ENCODE measurements at regions of chr19 and their contacts with region 1.

Region 1: DNA sequence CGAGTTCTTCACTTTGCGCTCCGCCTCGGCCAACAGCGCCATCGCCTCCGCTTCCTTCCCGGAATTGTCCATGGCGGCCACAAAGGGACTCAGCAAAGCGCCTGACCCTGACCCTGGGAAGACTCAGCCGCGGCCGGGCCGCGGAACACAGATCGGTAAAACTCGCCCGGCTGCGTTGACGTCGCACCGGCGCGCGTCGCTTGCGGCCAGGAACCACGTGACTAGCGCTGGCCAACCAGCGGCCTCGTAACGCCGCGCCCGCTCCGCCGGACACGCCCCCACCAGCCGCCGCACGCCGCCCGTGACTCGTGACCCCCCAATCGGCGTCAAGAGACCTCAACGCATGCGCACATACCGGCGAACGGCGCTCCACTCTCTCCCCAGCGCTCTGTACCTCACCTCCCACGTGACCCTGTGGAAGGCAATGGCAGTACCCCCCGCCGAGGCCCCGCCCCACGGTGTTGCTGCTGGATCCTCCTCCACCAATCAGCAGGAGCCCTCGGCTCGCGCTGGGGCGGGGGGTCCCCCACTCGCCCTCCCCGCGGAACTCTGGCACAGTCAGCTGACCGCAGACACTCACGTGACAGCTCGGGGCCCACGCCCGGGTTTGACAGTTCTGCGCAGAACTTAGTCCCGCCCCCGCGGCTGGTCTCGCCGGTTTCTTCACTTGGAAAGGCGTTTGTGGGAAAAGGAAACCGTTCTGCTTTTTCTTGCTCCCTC is at the start of gene NAPA:
- DNase-seq: peak; percentile 100
- ATAC-seq: peak; percentile 95
- H3K4me3 Mint-ChIP-seq: peak within 1 kb of the TSS; percentile 95
- H3K27ac Mint-ChIP-seq: peak within 1 kb of the TSS; percentile 97
- H3K4me1 Mint-ChIP-seq: peaks cover 58% of the 10 kb centered on the region
- H3K27me3 Mint-ChIP-seq: peaks cover 8% of the 10 kb centered on the region
- total RNA-seq, gene NAPA: 96.4 to 103 TPM

Region 2: DNA sequence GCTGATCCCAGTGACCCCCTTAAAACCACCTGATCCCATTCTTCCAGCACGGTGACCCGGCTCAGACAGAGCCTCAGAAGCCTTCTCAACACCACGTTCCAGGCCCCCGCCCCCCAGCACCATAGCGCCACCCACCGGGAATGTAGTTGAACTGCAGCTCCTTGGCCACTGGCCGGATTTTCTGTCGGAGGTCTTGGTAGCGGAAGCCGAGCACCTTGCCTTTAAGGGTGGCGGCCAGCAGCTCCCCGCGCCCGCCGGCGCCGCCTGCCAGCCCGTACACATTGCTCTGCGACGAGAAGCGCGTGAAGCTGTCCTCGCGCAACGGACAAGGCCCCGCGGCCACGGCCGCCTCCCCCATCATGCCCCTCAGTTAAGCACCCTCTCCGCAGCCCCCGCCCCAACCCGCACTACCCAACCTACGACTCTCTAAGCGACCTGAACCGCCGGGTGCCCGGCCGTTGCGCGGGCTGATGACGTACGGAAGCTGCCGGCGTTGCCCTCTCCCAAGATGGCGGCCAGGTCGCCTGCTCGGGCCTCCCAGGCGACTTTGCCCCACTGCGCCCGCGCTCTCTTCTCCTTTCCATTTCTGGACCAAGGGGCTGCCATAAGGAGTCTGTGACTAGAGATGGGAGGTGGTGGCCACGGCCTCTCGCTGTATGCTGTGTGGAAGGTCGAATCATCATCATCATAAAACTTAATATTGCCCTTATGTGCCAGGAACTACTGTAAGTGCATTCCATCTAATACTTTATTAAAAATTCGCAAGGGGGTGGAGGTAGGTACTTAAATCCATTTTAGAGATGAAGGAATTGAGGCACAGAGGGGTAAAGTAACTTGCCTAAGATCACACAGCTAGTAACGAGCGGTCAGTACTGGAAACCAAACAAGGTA is 31.0 kb before region 1 on chr19 and contains the start of gene KPTN:
- POLR2A ChIA-PET with region 1: interaction called, 20 read pairs
- DNase-seq: peak; percentile 92
- ATAC-seq: peak; percentile 87
- H3K4me3 Mint-ChIP-seq: peak within 1 kb of the TSS; percentile 99
- H3K27ac Mint-ChIP-seq: peak within 1 kb of the TSS; percentile 96
- H3K4me1 Mint-ChIP-seq: peaks cover 32% of the 10 kb centered on the region
- H3K27me3 Mint-ChIP-seq: no peaks in the 10 kb centered on the region
- total RNA-seq, gene KPTN: 8.0 to 8.6 TPM

Region 3: DNA sequence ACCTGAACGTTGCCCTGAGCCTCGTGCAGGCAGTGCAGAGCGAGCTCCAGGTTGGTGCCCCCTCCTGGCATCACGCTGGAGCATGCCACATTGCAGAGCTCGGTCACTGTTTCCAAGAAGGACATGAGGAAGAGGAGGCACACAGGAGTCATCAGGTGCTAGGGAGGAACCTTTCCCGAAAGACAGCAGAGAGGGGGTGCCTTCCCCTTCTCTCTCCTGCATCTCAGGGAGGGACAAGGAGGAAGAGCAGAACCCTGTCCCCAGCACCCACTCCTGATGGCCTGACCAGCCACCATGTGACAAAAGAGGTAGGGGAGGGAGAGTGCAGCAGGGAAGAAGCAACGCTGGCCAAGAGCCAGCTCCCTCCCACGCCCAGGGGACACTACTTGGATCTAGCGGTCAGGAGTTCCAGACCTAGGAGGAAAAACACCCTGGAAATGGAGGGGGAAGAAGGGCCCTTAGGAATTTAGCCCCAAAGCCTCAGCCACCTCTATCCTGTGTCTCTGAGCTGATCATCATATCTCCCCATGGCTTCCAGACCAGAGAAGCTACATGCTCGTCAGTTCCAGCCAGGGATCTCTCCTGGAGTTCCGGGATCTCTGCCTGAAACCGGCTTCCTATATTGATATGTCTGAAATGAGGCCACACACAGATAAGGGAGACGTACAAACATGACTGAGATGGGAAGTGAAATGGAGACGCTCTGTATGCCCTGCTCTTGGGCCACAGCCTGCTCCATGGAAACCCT is 16.8 kb after region 1 on chr19:
- POLR2A ChIA-PET with region 1: no interaction called
- DNase-seq: no peak
- ATAC-seq: no peak
- H3K4me3 Mint-ChIP-seq: no peak overlapping the region
- H3K27ac Mint-ChIP-seq: no peak overlapping the region
- H3K4me1 Mint-ChIP-seq: no peaks in the 10 kb centered on the region
- H3K27me3 Mint-ChIP-seq: peaks cover 3% of the 10 kb centered on the region

Region 4: GRCh38 chr19:47600246-47601179 is 85.5 kb after region 1 on chr19:
- POLR2A ChIA-PET with region 1: interaction called, 42 read pairs
- DNase-seq: peak; percentile 95
- ATAC-seq: peak; percentile 97
- H3K4me3 Mint-ChIP-seq: peak overlapping the region; percentile 81
- H3K27ac Mint-ChIP-seq: peak overlapping the region; percentile 93
- H3K4me1 Mint-ChIP-seq: peaks cover 32% of the 10 kb centered on the region
- H3K27me3 Mint-ChIP-seq: peaks cover 15% of the 10 kb centered on the region

Region 5: GRCh38 chr19:47608074-47608918 is 93.3 kb after region 1 on chr19:
- POLR2A ChIA-PET with region 1: interaction called, 20 read pairs
- DNase-seq: peak; percentile 100
- ATAC-seq: peak; percentile 90
- H3K4me3 Mint-ChIP-seq: peak overlapping the region; percentile 89
- H3K27ac Mint-ChIP-seq: peak overlapping the region; percentile 86
- H3K4me1 Mint-ChIP-seq: peaks cover 23% of the 10 kb centered on the region
- H3K27me3 Mint-ChIP-seq: peaks cover 9% of the 10 kb centered on the region

Measured in activated naive CD8-positive, alpha-beta T cell treated with anti-CD3 and anti-CD28 coated beads, Interleukin-2, amount 10 ng/mL, durations not matched to agents 7 days and 5 days (primary cell).